Activated T-helper 1 cell treated with anti-CD3 and anti-CD28 coated beads, Interleukin-12 subunit alpha, Interleukin-12 subunit beta, Interleukin-2, Interleukin-4 antibody, amounts not matched to agents 30 ng/mL and 10 ng/mL and 1 ng/mL, durations not matched to agents 14 hours and 24 hours and 36 hours (primary cell): ENCODE measurements at regions of chr17 and their contacts with region 1.

Region 1: DNA sequence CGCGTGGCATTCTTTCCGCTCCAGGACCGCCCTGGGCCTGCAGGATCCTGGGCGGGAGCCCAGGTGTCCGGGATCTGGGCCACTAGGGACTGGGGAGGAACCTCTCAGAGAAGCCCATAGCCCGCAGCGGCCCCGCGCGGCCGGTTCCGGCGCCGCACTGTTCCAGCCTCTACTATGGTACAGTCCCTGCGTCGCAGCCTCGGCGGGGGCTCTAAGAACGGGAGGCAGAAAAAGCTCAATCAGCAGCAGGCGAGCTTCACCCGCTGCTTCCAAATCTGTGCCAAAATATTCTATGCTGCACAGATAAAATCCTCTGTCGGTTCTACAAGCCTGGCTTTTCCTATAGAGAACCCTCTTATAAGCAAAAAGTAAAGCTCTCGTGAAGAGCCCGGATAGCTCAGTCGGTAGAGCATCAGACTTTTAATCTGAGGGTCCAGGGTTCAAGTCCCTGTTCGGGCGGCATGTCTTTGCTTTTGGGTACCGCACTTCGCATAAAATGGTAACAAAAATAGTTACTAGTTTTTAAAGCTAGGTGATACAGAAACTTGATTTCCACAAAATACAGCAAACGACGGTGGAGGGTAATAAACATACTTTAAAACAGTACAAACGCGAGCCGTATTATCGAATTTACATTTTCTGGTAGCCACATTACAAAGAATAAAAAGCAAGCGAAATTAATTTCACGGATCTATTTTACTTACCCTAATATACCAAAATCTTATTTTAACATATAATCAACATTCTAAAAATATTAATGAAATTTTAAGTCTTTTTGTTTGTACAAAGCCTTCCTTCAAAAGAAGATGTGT is 661 bp upstream of the ALOXE3 start:
- DNase-seq: peak; percentile 78
- H3K4me3 Mint-ChIP-seq: peak overlapping the region; percentile 91
- H3K27ac Mint-ChIP-seq: peak overlapping the region; percentile 97
- H3K4me1 Mint-ChIP-seq: peaks cover 46% of the 10 kb centered on the region
- H3K27me3 Mint-ChIP-seq: peaks cover 67% of the 10 kb centered on the region

Region 2: DNA sequence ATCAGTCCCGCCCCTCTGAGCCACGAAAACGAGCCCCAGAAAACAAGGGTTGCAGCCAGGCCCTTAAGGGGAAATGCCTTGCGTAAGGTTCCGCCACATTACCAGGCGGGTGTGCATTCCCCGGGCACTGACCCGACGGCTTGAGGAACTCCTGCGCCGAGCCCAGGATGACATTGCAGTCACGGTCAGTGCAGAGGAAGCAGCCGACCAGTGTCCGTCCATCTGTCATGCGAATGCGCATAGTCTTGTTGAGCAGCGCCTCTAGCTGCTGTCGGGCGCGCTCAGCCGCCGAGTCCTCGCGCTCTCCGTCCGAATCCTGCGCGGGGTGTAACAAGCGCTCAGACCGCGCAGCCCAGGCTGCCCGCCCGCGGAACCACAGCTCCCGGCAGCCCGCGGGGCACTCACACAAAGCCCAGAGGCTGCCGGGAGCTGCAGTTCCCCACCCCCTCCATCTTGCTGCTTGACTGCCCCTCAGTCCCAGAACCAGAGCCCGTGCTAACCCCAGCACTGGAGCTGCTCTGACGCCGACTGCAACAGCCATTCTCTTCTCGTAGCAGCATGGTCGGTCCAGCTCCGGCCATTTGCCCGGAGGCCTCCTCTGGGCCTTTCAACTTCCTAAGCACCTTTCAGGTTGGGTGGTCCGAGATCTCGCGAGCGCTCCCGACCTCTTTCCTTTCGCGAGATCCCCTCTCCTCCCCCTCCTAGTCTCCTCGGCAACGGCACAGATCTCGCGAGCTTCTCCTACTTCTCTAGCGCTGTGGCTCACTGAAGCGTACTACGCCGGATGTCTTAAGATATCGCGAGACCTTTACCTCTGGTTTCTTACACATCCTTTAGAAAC is 261.9 kb before region 1 on chr17 and contains the start of gene NAA38:
- intact Hi-C with region 1: loop called (anchors 1 kb)
- DNase-seq: peak; percentile 92
- H3K4me3 Mint-ChIP-seq: no peak within 1 kb of the TSS
- H3K27ac Mint-ChIP-seq: no peak within 1 kb of the TSS
- H3K4me1 Mint-ChIP-seq: no peaks in the 10 kb centered on the region
- H3K27me3 Mint-ChIP-seq: no peaks in the 10 kb centered on the region
- total RNA-seq, gene NAA38: 36.4 and 43.5 TPM in 2 replicates

Region 3: DNA sequence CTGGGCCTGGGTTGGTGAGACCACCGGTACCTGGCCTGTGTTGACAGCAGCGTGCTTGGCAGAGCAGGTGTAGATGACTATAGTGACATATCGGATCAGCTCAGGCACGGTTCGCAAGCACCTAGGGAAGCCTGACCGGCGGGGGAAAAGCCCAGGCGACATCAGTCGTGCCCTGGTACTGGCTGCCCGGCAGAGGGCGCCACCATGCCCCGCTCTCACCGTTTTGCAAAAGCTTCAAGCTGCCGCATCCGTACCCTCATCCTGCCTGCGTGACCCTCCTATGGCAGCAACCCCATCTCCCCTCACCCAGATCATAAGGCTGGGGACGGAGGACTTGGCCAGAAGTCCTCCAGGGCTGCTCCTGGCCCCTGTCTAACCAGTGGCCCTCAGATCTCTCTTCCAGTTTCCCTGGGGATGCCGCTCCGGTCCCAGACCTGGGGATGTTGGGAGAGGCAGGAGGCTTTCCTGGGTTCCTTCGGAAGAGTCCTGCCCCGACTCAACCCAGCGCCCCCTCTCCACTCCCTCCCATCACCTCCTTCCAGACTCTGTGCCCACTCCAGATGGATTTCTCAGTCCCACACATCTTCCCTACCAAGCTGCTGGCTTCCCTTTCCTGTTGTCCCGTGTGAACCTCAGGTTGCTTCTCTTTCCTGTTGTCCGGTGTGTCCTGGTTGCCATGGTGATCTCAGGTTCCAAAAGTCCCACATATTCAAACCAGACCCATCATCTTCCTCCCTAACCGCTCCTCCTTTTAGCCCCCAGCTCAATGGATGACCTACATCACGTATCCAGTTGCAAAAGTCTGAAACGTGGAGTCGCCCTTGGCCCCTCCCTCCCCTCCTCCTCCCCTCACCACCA is 45.1 kb before region 1 on chr17:
- intact Hi-C with region 1: loop called (anchors 1 kb)
- DNase-seq: peak; percentile 75
- H3K4me3 Mint-ChIP-seq: peak overlapping the region; percentile 72
- H3K27ac Mint-ChIP-seq: peak overlapping the region; percentile 57
- H3K4me1 Mint-ChIP-seq: peaks cover 22% of the 10 kb centered on the region
- H3K27me3 Mint-ChIP-seq: peaks cover 43% of the 10 kb centered on the region

Region 4: GRCh38 chr17:8156246-8156992 is 37.4 kb after region 1 on chr17:
- intact Hi-C with region 1: loop called (anchors 1 kb)
- DNase-seq: peak; percentile 100
- H3K4me3 Mint-ChIP-seq: no peak overlapping the region
- H3K27ac Mint-ChIP-seq: no peak overlapping the region
- H3K4me1 Mint-ChIP-seq: peaks cover 56% of the 10 kb centered on the region
- H3K27me3 Mint-ChIP-seq: no peaks in the 10 kb centered on the region

Region 5: DNA sequence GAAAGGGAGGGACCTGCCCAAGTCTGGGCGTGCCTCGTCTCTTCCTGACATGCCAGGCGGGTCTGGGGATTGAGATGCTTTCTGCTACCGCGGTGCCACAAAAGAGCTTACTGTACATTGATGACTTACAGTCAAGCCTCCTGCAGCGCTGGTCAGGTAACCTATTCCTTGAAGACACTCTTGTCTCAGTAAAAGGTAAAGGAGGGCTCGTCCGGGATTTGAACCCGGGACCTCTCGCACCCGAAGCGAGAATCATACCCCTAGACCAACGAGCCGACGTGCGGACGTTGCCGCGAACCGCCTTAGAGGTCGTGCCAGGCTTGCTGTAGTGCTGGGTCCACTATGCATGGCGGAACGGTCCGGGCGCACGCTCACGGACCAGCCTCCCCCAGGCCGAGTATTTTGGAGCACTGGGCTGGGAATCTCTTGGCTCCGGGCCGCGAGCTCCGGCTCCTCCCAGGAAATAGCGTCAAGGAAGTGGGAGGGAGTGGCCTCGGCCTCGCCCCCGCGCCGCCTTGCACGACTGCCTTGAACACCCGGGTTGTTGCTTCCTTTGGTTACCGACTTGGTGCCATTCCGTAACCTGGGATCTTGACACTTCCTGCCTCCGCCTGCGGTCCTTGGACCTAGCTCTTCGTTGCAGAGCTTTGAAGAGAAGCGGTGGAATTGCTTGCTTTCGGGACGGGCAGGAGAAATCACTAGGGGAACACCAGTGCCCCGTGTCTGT is 103.8 kb after region 1 on chr17:
- intact Hi-C with region 1: loop called (anchors 1 kb)
- DNase-seq: peak; percentile 85
- H3K4me3 Mint-ChIP-seq: peak overlapping the region; percentile 97
- H3K27ac Mint-ChIP-seq: peak overlapping the region; percentile 98
- H3K4me1 Mint-ChIP-seq: peaks cover 70% of the 10 kb centered on the region
- H3K27me3 Mint-ChIP-seq: peaks cover 21% of the 10 kb centered on the region

Region 6: GRCh38 chr17:8383143-8383822 is 264.3 kb after region 1 on chr17 and contains the start of gene RPL26:
- intact Hi-C with region 1: loop called (anchors 1 kb)
- DNase-seq: peak; percentile 94
- H3K4me3 Mint-ChIP-seq: peak within 1 kb of the TSS; percentile 90
- H3K27ac Mint-ChIP-seq: peak within 1 kb of the TSS; percentile 87
- H3K4me1 Mint-ChIP-seq: peaks cover 42% of the 10 kb centered on the region
- H3K27me3 Mint-ChIP-seq: no peaks in the 10 kb centered on the region
- total RNA-seq, gene RPL26: 2,163 and 2,185 TPM in 2 replicates